HCT116 (cell line): ENCODE measurements at regions of chr17 and their contacts with region 1.

Region 1: GRCh38 chr17:4733073-4733531 is 1.9 kb downstream of the MED11 start:
- DNase-seq: no peak
- ATAC-seq: no peak
- H3K4me3 ChIP-seq: no peak overlapping the region
- H3K27ac ChIP-seq: no peak overlapping the region
- H3K4me1 ChIP-seq: peaks cover 5 to 22% of the 10 kb centered on the region in 2 experiments
- H3K27me3 ChIP-seq: no peaks in the 10 kb centered on the region
- CTCF ChIP-seq: peak in 1 of 3 experiments; percentile 29; a peak in 2 of 6 replicates
- POLR2A ChIP-seq: no peak
- RAD21 ChIP-seq: no peak

Region 2: GRCh38 chr17:4891411-4892342 is 158.6 kb after region 1 on chr17:
- CTCF ChIA-PET with region 1: no interaction called
- POLR2A ChIA-PET with region 1: no interaction called
- RAD21 ChIA-PET with region 1: no interaction called
- intact Hi-C with region 1: loop called (anchors 1 kb)
- DNase-seq: no peak
- ATAC-seq: no peak
- H3K4me3 ChIP-seq: no peak overlapping the region
- H3K27ac ChIP-seq: no peak overlapping the region
- H3K4me1 ChIP-seq: no peaks in the 10 kb centered on the region
- H3K27me3 ChIP-seq: no peaks in the 10 kb centered on the region
- CTCF ChIP-seq: no peak
- POLR2A ChIP-seq: no peak
- RAD21 ChIP-seq: no peak